Activated T-helper 2 cell treated with anti-CD3 and anti-CD28 coated beads, Interferon-gamma antibody, Interleukin-2, Interleukin-4, amounts not matched to agents 10 μg/mL and 5 μg/mL and 100 μg/mL, durations not matched to agents 14 hours and 24 hours and 36 hours (primary cell): ENCODE measurements at regions of chr12 and their contacts with region 1.

Region 1: GRCh38 chr12:48183091-48183875 is at the start of gene CCDC184:
- DNase-seq: peak; percentile 72
- H3K4me3 Mint-ChIP-seq: peak within 1 kb of the TSS; percentile 84
- H3K27ac Mint-ChIP-seq: no peak within 1 kb of the TSS
- H3K4me1 Mint-ChIP-seq: peaks cover 18% of the 10 kb centered on the region
- H3K27me3 Mint-ChIP-seq: peaks cover 61% of the 10 kb centered on the region
- total RNA-seq, gene CCDC184: 0.34 and 0.64 TPM in 2 replicates

Region 2: DNA sequence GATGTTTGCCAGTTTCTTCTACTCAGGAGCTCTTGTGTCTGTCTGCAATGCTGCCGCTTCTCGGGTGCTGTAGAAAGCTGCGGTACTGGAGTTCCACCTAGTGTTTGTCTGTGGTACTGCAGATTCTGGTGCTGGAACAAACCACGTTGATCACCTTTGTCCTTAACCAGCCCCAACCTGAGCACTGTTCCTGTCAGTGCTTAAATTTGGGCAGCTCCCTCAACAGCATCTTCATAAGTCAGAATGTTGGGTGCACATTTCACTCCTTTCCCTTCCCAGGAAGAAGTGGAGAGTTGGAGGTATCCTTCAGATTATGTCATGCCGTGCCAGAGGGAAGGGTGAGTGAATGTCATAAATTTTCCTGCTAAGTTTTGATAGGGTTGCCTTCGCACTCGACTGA is 435.3 kb after region 1 on chr12:
- intact Hi-C with region 1: loop called (anchors 2 kb)
- DNase-seq: peak; percentile 64
- H3K4me3 Mint-ChIP-seq: no peak overlapping the region
- H3K27ac Mint-ChIP-seq: no peak overlapping the region
- H3K4me1 Mint-ChIP-seq: no peaks in the 10 kb centered on the region
- H3K27me3 Mint-ChIP-seq: peaks cover 22% of the 10 kb centered on the region